ENCODE measurements at regions of chr6 and their contacts with region 1.

Region 1: GRCh38 chr6:114839019-114839418 is 496.2 kb upstream of the HS3ST5 start:
- DNase-seq: no peak
- ATAC-seq: no peak
- H3K4me3 ChIP-seq: no peak overlapping the region
- H3K27ac ChIP-seq: no peak overlapping the region
- H3K4me1 ChIP-seq: no peaks in the 10 kb centered on the region
- H3K27me3 ChIP-seq: no peaks in the 10 kb centered on the region
- CTCF ChIP-seq: no peak

Region 2: GRCh38 chr6:114862819-114863218 is 23.8 kb after region 1 on chr6:
- CTCF ChIA-PET with region 1: interaction called, 3 read pairs
- POLR2A ChIA-PET with region 1: interaction called, 12 read pairs
- in situ Hi-C with region 1: no loop called
- intact Hi-C with region 1: no loop called
- DNase-seq: no peak
- ATAC-seq: no peak
- H3K4me3 ChIP-seq: no peak overlapping the region
- H3K27ac ChIP-seq: no peak overlapping the region
- H3K4me1 ChIP-seq: no peaks in the 10 kb centered on the region
- H3K27me3 ChIP-seq: no peaks in the 10 kb centered on the region
- CTCF ChIP-seq: no peak

Region 3: GRCh38 chr6:114906096-114906495 is 67.1 kb after region 1 on chr6:
- CTCF ChIA-PET with region 1: no interaction called
- POLR2A ChIA-PET with region 1: no interaction called
- in situ Hi-C with region 1: no loop called
- intact Hi-C with region 1: no loop called
- DNase-seq: no peak
- ATAC-seq: no peak
- H3K4me3 ChIP-seq: no peak overlapping the region
- H3K27ac ChIP-seq: no peak overlapping the region
- H3K4me1 ChIP-seq: no peaks in the 10 kb centered on the region
- H3K27me3 ChIP-seq: no peaks in the 10 kb centered on the region
- CTCF ChIP-seq: no peak

Measured in Panc1 (cell line).